Caco-2 (cell line): ENCODE measurements at regions of chr12 and their contacts with region 1.

Region 1: DNA sequence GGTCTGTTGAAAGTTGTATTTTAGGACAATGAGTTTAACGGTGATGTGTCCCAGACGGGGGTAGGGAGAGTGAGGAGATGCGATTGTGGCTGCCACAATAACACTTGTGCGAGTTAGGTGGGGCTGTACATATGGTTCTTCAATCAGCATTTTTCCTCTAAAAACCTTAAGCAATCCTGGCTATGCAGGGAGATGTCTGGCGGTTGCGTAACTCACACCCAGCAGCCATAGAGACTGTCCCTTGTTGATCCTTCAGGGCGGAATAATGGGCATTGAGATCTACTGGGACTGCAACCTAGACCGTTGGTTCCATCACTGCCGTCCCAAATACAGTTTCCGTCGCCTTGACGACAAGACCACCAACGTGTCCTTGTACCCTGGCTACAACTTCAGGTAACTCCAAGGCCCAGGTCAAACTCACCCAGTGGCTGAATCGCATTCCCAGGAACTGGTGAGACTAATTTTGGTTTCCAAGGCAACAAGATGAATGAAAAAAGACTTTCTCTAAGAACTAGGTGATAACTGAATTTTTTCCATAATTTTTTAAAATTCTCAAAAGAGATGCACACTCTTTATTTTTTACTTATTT is 34.6 kb downstream of the P2RX7 start:
- DNase-seq: peak; percentile 53 to 65
- H3K4me3 ChIP-seq: no peak overlapping the region
- H3K4me3 Mint-ChIP-seq: no peak overlapping the region
- H3K27ac Mint-ChIP-seq: peak overlapping the region; percentile 30
- H3K4me1 ChIP-seq: peaks cover 23% of the 10 kb centered on the region
- H3K4me1 Mint-ChIP-seq: peaks cover 13% of the 10 kb centered on the region
- H3K27me3 ChIP-seq: no peaks in the 10 kb centered on the region
- H3K27me3 Mint-ChIP-seq: no peaks in the 10 kb centered on the region
- CTCF ChIP-seq: no peak

Region 2: GRCh38 chr12:121124402-121125098 is 42.8 kb before region 1 on chr12:
- CTCF ChIA-PET with region 1: no interaction called
- POLR2A ChIA-PET with region 1: no interaction called
- intact Hi-C with region 1: loop called (anchors 2 kb)
- DNase-seq: peak; percentile 56 to 68
- H3K4me3 ChIP-seq: no peak overlapping the region
- H3K4me3 Mint-ChIP-seq: no peak overlapping the region
- H3K27ac Mint-ChIP-seq: peak overlapping the region; percentile 58
- H3K4me1 ChIP-seq: 0 out of 2 replicates have a peak, but pooled peaks cover 5% of the 10 kb centered on the region
- H3K4me1 Mint-ChIP-seq: peaks cover 15% of the 10 kb centered on the region
- H3K27me3 ChIP-seq: no peaks in the 10 kb centered on the region
- H3K27me3 Mint-ChIP-seq: no peaks in the 10 kb centered on the region
- CTCF ChIP-seq: no peak

Region 3: GRCh38 chr12:121144416-121144914 is 22.9 kb before region 1 on chr12:
- CTCF ChIA-PET with region 1: no interaction called
- POLR2A ChIA-PET with region 1: no interaction called
- intact Hi-C with region 1: no loop called
- DNase-seq: no peak
- H3K4me3 ChIP-seq: no peak overlapping the region
- H3K4me3 Mint-ChIP-seq: no peak overlapping the region
- H3K27ac Mint-ChIP-seq: no peak overlapping the region
- H3K4me1 ChIP-seq: no peaks in the 10 kb centered on the region
- H3K4me1 Mint-ChIP-seq: no peaks in the 10 kb centered on the region
- H3K27me3 ChIP-seq: no peaks in the 10 kb centered on the region
- H3K27me3 Mint-ChIP-seq: no peaks in the 10 kb centered on the region
- CTCF ChIP-seq: no peak

Region 4: GRCh38 chr12:121214855-121215745 is 47.8 kb after region 1 on chr12:
- CTCF ChIA-PET with region 1: no interaction called
- POLR2A ChIA-PET with region 1: no interaction called
- intact Hi-C with region 1: loop called (anchors 2 kb)
- DNase-seq: peak; percentile 49 to 54
- H3K4me3 ChIP-seq: no peak overlapping the region
- H3K4me3 Mint-ChIP-seq: no peak overlapping the region
- H3K27ac Mint-ChIP-seq: peak overlapping the region; percentile 53
- H3K4me1 ChIP-seq: peaks cover 34% of the 10 kb centered on the region
- H3K4me1 Mint-ChIP-seq: peaks cover 15% of the 10 kb centered on the region
- H3K27me3 ChIP-seq: no peaks in the 10 kb centered on the region
- H3K27me3 Mint-ChIP-seq: no peaks in the 10 kb centered on the region
- CTCF ChIP-seq: no peak